MCF 10A (cell line): ENCODE measurements at regions of chr16 and their contacts with region 1.

Region 1: GRCh38 chr16:70778901-70779309 is 22.1 kb downstream of the VAC14 start:
- DNase-seq: peak; percentile 89
- H3K4me3 Mint-ChIP-seq: no peak overlapping the region
- H3K27ac Mint-ChIP-seq: peak overlapping the region; percentile 86
- H3K4me1 Mint-ChIP-seq: peaks cover 15% of the 10 kb centered on the region
- H3K27me3 Mint-ChIP-seq: no peaks in the 10 kb centered on the region
- CTCF ChIP-seq: no peak

Region 2: GRCh38 chr16:70800781-70801530 is 22.1 kb after region 1 on chr16 and contains the start of gene VAC14:
- CTCF ChIA-PET with region 1: no interaction called
- POLR2A ChIA-PET with region 1: interaction called, 10 read pairs
- intact Hi-C with region 1: no loop called
- DNase-seq: peak; percentile 91
- H3K4me3 Mint-ChIP-seq: peak within 1 kb of the TSS; percentile 77
- H3K27ac Mint-ChIP-seq: peak within 1 kb of the TSS; percentile 87
- H3K4me1 Mint-ChIP-seq: peaks cover 32% of the 10 kb centered on the region
- H3K27me3 Mint-ChIP-seq: no peaks in the 10 kb centered on the region
- CTCF ChIP-seq: no peak
- total RNA-seq, gene VAC14: 25.5 and 47.9 TPM in 2 replicates